Stomach (tissue), 19 donors: ENCODE measurements at regions of chr2 and their contacts with region 1.

Region 1: DNA sequence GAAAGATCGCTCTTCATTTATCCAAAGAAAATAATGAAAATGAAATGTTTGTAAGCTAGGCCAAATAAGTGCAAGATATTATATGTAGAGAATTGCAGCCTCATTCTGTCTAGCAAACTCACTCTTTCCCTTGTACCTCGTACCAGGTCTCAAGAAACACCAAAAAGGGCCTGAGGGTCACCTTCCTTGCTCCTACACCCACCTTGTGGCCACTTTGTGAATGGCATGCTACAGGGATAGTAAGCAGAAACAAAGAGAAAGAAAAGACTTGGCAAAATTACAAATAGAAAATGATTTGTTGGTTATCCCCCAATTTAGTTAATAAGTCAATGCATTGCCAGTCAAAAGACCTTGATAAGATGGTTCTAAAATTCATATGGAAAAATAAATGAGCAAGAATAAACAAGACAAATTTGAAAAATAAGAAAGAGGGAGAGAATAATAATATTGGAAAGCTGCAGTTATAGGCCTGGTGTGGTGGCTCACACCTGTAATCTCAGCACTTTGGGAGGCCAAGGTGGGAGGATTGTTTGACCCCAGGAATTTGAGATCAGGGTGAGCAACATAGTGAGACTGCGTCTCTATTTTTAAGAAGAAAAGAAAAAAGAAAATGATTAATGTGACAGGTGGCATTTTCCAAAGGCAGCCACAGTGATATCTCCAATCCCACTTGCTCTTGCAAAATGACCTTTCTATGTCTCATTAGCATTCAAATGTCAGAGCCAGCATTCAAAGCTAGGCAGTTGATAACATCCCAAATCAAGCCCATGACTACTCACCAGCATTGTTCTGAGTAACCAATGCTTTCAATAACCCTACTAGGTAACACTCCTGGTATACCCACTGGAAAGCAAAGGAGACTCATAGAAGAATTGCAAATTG is 38.8 kb upstream of the BMP10 start:
- DNase-seq: peak; percentile 79 to 86
- H3K4me3 ChIP-seq: no peak overlapping the region
- H3K27ac ChIP-seq: no peak overlapping the region
- H3K4me1 ChIP-seq: peaks cover 16 to 32% (median 19%) of the 10 kb centered on the region in 4 donors
- H3K27me3 ChIP-seq: no peaks in the 10 kb centered on the region
- CTCF ChIP-seq: peak in 5 of 7 experiments; percentile 81 to 91 (median 89)
- EP300 ChIP-seq: no peak
- POLR2A ChIP-seq: no peak

Region 2: DNA sequence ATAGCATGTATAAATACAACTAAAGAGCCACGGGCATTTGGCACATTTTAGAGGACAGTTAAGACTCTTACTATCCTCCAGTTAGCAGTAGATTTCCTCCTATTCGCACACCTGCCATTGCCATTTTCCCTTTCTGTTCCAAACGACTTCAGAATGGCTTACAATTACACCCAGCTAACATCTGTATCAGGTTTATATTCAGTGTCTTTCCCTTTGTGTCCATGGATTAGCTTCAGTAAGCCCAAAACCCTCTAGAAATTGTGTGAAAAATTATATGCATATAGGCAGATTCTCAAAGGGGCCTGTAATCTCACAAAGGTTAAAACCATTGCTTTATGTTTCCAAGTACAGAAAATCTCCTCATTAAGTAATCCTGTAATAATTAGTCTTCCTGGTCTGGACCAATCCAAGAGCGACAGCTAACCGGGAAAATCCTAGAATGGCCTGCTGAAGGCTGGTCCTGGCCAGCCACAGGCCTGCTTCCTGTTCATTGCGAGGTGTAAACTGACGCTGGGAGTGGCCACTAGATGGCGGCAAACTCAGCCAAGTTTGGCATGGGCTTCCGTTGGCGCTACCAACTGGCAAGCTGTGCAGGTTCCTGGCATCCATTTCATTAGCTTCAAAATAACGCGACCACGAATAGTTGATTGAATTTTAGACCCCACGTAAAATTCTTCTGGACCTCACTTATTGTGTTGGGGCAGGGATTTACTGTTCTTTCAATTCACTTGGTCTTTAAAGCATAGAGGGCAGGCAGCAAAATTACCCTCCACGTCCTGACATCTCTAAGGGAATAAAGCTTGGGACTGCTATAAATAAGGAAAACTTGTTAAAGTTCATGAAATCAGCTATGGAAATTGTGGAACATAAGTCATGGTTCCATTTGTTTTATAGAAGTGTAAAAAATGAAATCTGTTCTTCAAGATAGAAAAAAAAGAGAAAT is 158.4 kb before region 1 on chr2:
- intact Hi-C with region 1: loop called (anchors 5 kb)
- DNase-seq: peak; percentile 93 to 96
- H3K4me3 ChIP-seq: no peak overlapping the region
- H3K27ac ChIP-seq: peak overlapping the region in 2 of 5 donors; percentile 10 to 14
- H3K4me1 ChIP-seq: peaks cover 0 to 36% (median 11%) of the 10 kb centered on the region in 4 donors
- H3K27me3 ChIP-seq: no peaks in the 10 kb centered on the region
- CTCF ChIP-seq: peak in 5 of 7 experiments; percentile 80 to 92 (median 86)
- EP300 ChIP-seq: no peak
- POLR2A ChIP-seq: no peak

Region 3: GRCh38 chr2:69054431-69054830 is 144.4 kb after region 1 on chr2:
- intact Hi-C with region 1: no loop called
- DNase-seq: no peak
- H3K4me3 ChIP-seq: no peak overlapping the region
- H3K27ac ChIP-seq: no peak overlapping the region
- H3K4me1 ChIP-seq: no peaks in the 10 kb centered on the region
- H3K27me3 ChIP-seq: no peaks in the 10 kb centered on the region
- CTCF ChIP-seq: no peak
- EP300 ChIP-seq: no peak
- POLR2A ChIP-seq: no peak